A673 (cell line): ENCODE measurements at regions of chr10 and their contacts with region 1.

Region 1: GRCh38 chr10:17257466-17258321 is 29.7 kb downstream of the VIM start:
- DNase-seq: peak; percentile 86
- H3K4me3 ChIP-seq: no peak overlapping the region
- H3K27ac ChIP-seq: no peak overlapping the region
- H3K4me1 ChIP-seq: peaks cover 12% of the 10 kb centered on the region
- H3K27me3 ChIP-seq: no peaks in the 10 kb centered on the region
- CTCF ChIP-seq: peak; percentile 90

Region 2: GRCh38 chr10:16891375-16892313 is 366.1 kb before region 1 on chr10:
- CTCF ChIA-PET with region 1: no interaction called
- POLR2A ChIA-PET with region 1: no interaction called
- intact Hi-C with region 1: loop called (anchors 1 kb)
- DNase-seq: peak; percentile 77
- H3K4me3 ChIP-seq: no peak overlapping the region
- H3K27ac ChIP-seq: no peak overlapping the region
- H3K4me1 ChIP-seq: peaks cover 20% of the 10 kb centered on the region
- H3K27me3 ChIP-seq: no peaks in the 10 kb centered on the region
- CTCF ChIP-seq: peak; percentile 65

Region 3: DNA sequence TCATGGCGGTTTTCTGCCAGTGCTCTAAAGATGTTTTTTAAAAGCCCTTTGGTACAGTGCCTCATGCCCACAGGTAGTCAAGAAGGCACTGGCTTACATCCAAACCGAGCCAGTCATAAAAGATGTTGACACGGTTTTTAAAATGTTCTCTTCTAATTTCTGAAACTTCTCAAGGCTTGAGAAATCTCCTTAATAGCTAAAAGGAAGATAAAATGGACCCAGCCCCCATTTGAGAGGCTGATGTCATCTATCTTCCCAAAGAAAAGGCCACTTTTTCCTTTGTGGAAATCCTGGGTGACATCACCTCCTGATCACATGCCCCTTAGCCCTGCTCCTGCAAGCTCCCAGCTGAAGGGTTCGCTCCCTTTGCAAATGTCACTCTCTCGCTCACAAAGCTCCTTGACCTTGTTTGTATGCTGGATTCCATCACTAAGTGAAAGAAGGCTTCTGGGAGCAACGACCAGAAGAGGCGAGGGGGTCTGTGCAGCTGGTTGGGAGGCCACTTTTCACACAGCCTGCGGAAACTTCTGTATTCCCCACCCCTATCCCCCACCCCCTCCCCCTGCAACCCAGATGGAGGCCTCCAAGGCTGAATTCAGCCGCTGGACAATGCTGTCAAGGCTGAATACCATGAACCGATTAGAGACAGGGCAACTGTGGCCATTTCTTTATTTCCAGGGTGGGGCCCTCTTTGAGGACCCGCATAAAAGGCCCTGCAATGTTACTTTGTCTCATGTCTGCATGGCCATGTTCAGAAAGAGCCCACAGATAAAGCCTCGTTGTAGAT is 250.9 kb before region 1 on chr10:
- CTCF ChIA-PET with region 1: no interaction called
- POLR2A ChIA-PET with region 1: no interaction called
- intact Hi-C with region 1: no loop called
- DNase-seq: peak; percentile 43
- H3K4me3 ChIP-seq: no peak overlapping the region
- H3K27ac ChIP-seq: no peak overlapping the region
- H3K4me1 ChIP-seq: peaks cover 33% of the 10 kb centered on the region
- H3K27me3 ChIP-seq: no peaks in the 10 kb centered on the region
- CTCF ChIP-seq: no peak

Region 4: DNA sequence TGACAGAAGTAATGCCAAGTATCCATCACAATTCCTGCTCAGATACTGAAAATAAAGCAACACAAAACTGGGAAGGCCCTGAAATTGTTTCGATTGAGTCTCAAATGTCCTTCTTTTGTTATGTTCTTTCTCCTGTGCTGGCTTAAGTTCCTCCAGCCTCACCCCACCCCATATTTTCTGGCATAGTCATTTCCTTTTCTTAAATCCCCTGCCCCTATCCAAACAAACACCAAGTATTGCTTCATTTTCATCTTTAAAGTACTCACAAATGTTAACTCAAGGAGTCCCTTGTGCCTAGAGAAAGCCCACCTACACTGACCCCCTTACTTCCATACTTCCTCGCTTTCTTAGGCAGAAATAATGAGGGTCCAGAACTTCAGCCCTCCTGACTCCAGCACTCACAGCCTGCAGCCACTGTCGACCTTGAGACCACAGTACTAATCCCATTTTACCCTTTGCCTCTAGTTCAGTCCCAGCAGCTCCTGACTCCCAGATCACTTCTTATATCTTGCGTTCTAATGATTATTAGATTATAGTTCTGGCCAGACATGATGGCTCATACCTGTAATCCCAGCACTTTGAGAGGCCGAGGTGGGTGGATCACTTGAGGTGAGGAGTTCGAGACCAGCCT is 269.9 kb after region 1 on chr10:
- CTCF ChIA-PET with region 1: no interaction called
- POLR2A ChIA-PET with region 1: no interaction called
- intact Hi-C with region 1: no loop called
- DNase-seq: peak; percentile 26
- H3K4me3 ChIP-seq: no peak overlapping the region
- H3K27ac ChIP-seq: no peak overlapping the region
- H3K4me1 ChIP-seq: no peaks in the 10 kb centered on the region
- H3K27me3 ChIP-seq: no peaks in the 10 kb centered on the region
- CTCF ChIP-seq: no peak

Region 5: GRCh38 chr10:17888189-17888588 is 630.5 kb after region 1 on chr10:
- CTCF ChIA-PET with region 1: no interaction called
- POLR2A ChIA-PET with region 1: no interaction called
- intact Hi-C with region 1: no loop called
- DNase-seq: no peak
- H3K4me3 ChIP-seq: no peak overlapping the region
- H3K27ac ChIP-seq: no peak overlapping the region
- H3K4me1 ChIP-seq: no peaks in the 10 kb centered on the region
- H3K27me3 ChIP-seq: no peaks in the 10 kb centered on the region
- CTCF ChIP-seq: no peak